Breast epithelium (tissue), 4 donors: ENCODE measurements at regions of chr5 and their contacts with region 1.

Region 1: GRCh38 chr5:149646564-149646963 is 65.3 kb downstream of the ARHGEF37 start:
- DNase-seq: no peak
- H3K4me3 ChIP-seq: no peak overlapping the region
- H3K27ac ChIP-seq: no peak overlapping the region
- H3K4me1 ChIP-seq: no peaks in the 10 kb centered on the region
- H3K27me3 ChIP-seq: no peaks in the 10 kb centered on the region
- CTCF ChIP-seq: no peak
- POLR2A ChIP-seq: no peak

Region 2: DNA sequence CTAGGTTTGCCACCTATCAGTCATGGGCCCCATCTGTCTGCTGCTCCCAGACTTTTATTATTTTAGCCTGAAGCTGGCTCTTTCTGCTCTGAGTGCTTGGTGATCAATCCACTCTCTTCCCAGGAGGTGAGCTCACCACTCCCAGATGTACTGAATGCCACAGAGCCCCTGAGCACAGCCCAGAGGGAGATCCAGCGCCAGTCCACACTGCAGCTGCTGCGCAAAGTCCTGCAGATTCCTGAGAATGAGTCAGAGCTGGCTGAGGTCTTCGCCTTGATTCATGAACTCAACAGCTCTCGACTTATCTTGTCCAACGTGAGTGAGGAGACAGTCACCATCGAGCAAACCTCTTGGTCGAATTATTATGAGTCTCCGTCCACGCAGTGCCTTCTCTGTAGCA is 389.9 kb after region 1 on chr5:
- intact Hi-C with region 1: no loop called
- DNase-seq: no peak
- H3K4me3 ChIP-seq: no peak overlapping the region
- H3K27ac ChIP-seq: peak overlapping the region in 1 of 2 donors; percentile 31
- H3K4me1 ChIP-seq: no peaks in the 10 kb centered on the region
- H3K27me3 ChIP-seq: no peaks in the 10 kb centered on the region
- CTCF ChIP-seq: no peak
- POLR2A ChIP-seq: no peak

Region 3: DNA sequence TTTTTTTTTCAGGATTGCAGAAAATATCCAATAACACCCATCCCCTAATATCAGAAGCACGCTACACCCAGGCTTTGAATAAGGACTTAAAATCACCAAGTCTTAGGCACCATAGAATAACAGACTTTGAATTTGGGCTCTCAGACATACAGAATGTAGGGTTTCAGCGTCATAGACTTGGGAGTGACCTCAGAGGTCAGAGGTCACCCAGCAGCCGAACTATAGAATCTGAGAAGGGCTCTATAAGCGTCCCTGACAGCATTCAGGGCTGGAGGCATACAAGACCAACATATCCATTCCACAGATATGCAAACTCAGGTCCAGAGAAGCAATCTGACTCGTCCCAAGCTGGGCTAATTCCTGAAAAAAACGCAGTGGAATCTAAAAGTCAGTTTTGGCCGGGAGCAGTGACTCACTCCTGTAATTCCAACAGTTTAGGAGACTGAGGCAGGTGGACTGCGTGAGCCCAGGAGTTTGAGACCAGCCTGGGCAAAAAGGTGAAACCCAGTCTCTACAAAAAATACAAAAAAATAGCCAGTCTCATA is 578.0 kb after region 1 on chr5:
- intact Hi-C with region 1: loop called (anchors 5 kb)
- DNase-seq: no peak
- H3K4me3 ChIP-seq: no peak overlapping the region
- H3K27ac ChIP-seq: no peak overlapping the region
- H3K4me1 ChIP-seq: no peaks in the 10 kb centered on the region
- H3K27me3 ChIP-seq: no peaks in the 10 kb centered on the region
- CTCF ChIP-seq: no peak
- POLR2A ChIP-seq: no peak